ENCODE measurements at regions of chr1 and their contacts with region 1.

Region 1: DNA sequence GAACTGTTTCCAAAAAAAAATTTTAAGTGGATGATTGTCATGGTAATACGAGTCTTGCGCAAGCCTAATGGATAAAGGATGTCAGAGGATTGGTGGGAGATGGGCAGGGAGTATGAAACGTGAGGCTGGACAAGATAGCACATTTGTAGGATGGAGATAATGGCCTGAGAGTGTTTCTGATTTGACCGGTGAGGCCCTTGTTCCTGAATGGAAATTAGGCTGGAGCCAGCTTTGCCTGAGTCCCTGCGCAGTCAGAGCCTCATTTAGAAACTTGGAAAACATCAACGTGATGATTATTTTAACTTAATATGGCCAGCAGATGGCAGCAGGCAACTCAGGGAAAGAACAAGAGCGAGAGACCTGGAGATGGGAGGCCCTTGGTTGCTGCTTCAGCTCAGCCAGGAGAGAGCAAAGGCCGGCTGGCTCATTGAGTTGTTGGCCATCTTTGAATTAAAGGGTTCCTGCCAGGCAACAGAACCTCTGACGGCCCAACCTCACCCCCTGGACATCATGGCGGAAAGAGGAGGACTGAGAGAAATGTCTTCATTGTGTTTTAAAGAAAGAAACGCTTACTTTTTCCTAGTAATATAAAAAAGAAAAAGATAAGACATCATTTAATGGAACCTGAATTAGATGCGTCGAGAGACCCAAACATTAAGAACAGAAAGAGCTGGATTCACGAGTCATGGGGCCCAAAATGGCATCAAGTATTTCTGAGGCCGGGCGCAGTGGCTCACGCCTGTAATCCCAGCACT is 80.3 kb downstream of the SELENOF start:
- DNase-seq: peak; percentile 71
- H3K4me3 ChIP-seq: peak overlapping the region in 1 of 2 experiments; percentile 9; a peak in 1 of 4 replicates
- H3K27ac ChIP-seq: peak overlapping the region; percentile 26 to 36; a peak in 2 of 4 replicates
- H3K4me1 ChIP-seq: no peaks in the 10 kb centered on the region
- H3K27me3 ChIP-seq: no peaks in the 10 kb centered on the region
- CTCF ChIP-seq: peak; percentile 70
- EP300 ChIP-seq: no peak
- RAD21 ChIP-seq: peak; percentile 87

Region 2: GRCh38 chr1:86616871-86617270 is 216.8 kb before region 1 on chr1:
- CTCF ChIA-PET with region 1: no interaction called
- POLR2A ChIA-PET with region 1: no interaction called
- DNase-seq: no peak
- H3K4me3 ChIP-seq: no peak overlapping the region
- H3K27ac ChIP-seq: no peak overlapping the region
- H3K4me1 ChIP-seq: no peaks in the 10 kb centered on the region
- H3K27me3 ChIP-seq: no peaks in the 10 kb centered on the region
- CTCF ChIP-seq: no peak
- EP300 ChIP-seq: no peak
- RAD21 ChIP-seq: no peak

Region 3: DNA sequence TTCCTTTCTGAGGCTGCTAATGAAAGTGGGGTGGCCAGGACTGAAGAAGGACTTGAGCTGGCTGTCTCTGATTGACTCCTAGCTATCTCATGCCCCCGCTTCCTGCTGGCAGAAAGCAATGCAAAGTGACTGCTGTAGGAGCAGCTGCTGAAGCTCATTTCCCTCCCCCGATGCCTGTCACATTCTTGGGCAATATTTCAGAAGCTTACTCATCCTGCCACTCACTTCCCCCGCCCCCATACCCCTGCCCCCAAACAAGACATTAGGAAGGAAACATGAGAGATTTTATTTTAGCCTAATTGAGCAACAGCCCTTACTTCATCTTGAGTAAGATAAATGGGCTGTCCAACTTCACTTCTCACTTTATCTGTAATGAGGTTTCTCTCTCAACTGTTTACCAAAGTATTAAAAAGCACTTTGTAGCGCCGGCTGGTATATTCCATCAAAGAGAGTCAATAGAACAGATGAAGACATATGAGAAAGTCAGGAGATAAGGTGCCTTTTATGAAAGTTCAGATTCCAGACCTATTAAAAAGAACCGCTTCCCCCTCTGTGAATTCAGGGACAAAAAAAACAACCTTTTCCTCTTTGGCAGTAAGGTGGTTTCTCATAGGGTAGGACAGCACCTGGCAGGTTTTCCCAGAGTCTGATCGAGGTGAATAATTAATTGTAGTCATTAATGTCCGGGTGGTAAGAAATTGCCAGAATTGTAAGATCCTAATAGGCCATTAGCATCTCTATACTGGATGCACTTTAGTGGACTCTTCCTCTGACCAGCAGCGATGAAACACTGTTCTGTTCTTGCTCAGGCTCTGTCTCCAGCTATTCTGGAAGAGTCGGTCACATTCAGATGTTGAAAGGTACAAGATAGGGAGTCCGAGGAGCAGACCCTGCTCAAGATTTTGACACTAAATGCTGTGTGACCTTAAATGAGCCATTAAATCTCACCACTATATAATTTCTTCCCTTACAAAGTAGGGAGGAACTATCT is 59.0 kb before region 1 on chr1:
- CTCF ChIA-PET with region 1: no interaction called
- POLR2A ChIA-PET with region 1: no interaction called
- DNase-seq: no peak
- H3K4me3 ChIP-seq: peak overlapping the region in 1 of 2 experiments; percentile 46; a peak in 2 of 4 replicates
- H3K27ac ChIP-seq: peak overlapping the region; percentile 72 to 81; a peak in 3 of 4 replicates
- H3K4me1 ChIP-seq: peaks cover 2 to 42% of the 10 kb centered on the region in 2 experiments
- H3K27me3 ChIP-seq: no peaks in the 10 kb centered on the region
- CTCF ChIP-seq: no peak
- EP300 ChIP-seq: peak; percentile 78 to 84; a peak in 3 of 4 replicates
- RAD21 ChIP-seq: no peak

Region 4: GRCh38 chr1:86846166-86846647 is 12.6 kb after region 1 on chr1:
- CTCF ChIA-PET with region 1: interaction called, 11 read pairs
- POLR2A ChIA-PET with region 1: interaction called, 5 read pairs
- DNase-seq: peak; percentile 7
- H3K4me3 ChIP-seq: no peak overlapping the region
- H3K27ac ChIP-seq: peak overlapping the region; percentile 0 to 63; a peak in 2 of 4 replicates
- H3K4me1 ChIP-seq: no peaks in the 10 kb centered on the region; a peak in 1 of 4 replicates
- H3K27me3 ChIP-seq: no peaks in the 10 kb centered on the region
- CTCF ChIP-seq: no peak
- EP300 ChIP-seq: peak; percentile 80 to 84
- RAD21 ChIP-seq: no peak

Region 5: GRCh38 chr1:86860020-86860419 is 26.4 kb after region 1 on chr1:
- CTCF ChIA-PET with region 1: interaction called, 10 read pairs
- POLR2A ChIA-PET with region 1: no interaction called
- DNase-seq: no peak
- H3K4me3 ChIP-seq: no peak overlapping the region
- H3K27ac ChIP-seq: no peak overlapping the region
- H3K4me1 ChIP-seq: no peaks in the 10 kb centered on the region
- H3K27me3 ChIP-seq: no peaks in the 10 kb centered on the region
- CTCF ChIP-seq: no peak
- EP300 ChIP-seq: no peak
- RAD21 ChIP-seq: no peak

Region 6: GRCh38 chr1:86965012-86965826 is 131.6 kb after region 1 on chr1:
- CTCF ChIA-PET with region 1: interaction called, 19 read pairs
- POLR2A ChIA-PET with region 1: no interaction called
- DNase-seq: peak; percentile 40
- H3K4me3 ChIP-seq: no peak overlapping the region
- H3K27ac ChIP-seq: no peak overlapping the region
- H3K4me1 ChIP-seq: no peaks in the 10 kb centered on the region
- H3K27me3 ChIP-seq: no peaks in the 10 kb centered on the region
- CTCF ChIP-seq: peak; percentile 76
- EP300 ChIP-seq: no peak
- RAD21 ChIP-seq: peak; percentile 73